Activated CD4-positive, alpha-beta memory T cell treated with anti-CD3 and anti-CD28 coated beads, Interleukin-2, amount 10 ng/mL, durations not matched to agents 7 days and 5 days (primary cell): ENCODE measurements at regions of chr1 and their contacts with region 1.

Region 1: GRCh38 chr1:9004700-9005394 is 21.4 kb downstream of the SLC2A7 start:
- DNase-seq: peak; percentile 87
- H3K4me3 Mint-ChIP-seq: no peak overlapping the region
- H3K27ac Mint-ChIP-seq: no peak overlapping the region
- H3K4me1 Mint-ChIP-seq: peaks cover 10% of the 10 kb centered on the region
- H3K27me3 Mint-ChIP-seq: peaks cover 2% of the 10 kb centered on the region

Region 2: DNA sequence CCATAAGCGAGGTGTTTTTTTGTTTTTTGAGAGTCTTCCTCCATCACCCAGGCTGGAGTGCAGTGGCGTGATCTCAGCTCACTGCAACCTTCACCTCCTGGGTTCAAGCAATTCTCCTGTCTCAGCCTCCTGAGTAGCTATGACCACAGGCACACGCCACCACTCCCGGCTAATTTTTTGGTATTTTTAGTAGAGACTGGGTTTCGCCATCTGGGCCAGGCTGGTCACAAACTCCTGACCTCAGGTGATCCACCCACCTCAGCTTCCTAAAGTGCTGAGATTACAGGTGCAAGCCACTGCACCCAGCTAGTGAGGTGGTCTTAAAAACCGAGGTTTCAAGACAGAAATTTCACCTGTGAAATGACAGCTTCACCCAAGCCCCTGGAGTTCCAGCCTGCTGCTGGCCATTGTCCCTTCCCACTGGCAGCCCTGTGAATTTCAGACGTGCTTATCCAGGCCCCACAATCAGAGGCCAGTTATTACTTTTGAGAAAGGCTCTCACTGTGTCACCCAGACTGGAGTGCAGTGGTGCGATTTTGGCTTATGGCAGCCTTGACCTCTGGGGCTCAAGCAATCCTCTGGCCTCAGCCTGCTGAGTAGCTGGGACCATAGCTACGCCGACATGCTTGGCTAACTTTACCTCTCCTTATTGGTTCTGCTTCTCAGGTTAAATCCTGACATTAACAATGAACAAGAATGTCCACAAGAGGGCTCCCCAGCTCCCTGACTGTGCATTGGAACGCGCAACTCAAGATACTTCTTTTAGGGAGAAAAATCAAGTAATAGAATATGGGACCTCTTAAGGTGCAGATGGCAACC is 145.8 kb before region 1 on chr1:
- CTCF ChIA-PET with region 1: interaction called, 72 read pairs
- POLR2A ChIA-PET with region 1: interaction called, 14 read pairs
- DNase-seq: peak; percentile 54
- H3K4me3 Mint-ChIP-seq: no peak overlapping the region
- H3K27ac Mint-ChIP-seq: peak overlapping the region; percentile 77
- H3K4me1 Mint-ChIP-seq: peaks cover 56% of the 10 kb centered on the region
- H3K27me3 Mint-ChIP-seq: no peaks in the 10 kb centered on the region

Region 3: GRCh38 chr1:8899076-8899475 is 105.8 kb before region 1 on chr1:
- CTCF ChIA-PET with region 1: interaction called, 22 read pairs
- POLR2A ChIA-PET with region 1: no interaction called
- DNase-seq: no peak
- H3K4me3 Mint-ChIP-seq: no peak overlapping the region
- H3K27ac Mint-ChIP-seq: peak overlapping the region; percentile 99
- H3K4me1 Mint-ChIP-seq: peaks cover 48% of the 10 kb centered on the region
- H3K27me3 Mint-ChIP-seq: no peaks in the 10 kb centered on the region

Region 4: DNA sequence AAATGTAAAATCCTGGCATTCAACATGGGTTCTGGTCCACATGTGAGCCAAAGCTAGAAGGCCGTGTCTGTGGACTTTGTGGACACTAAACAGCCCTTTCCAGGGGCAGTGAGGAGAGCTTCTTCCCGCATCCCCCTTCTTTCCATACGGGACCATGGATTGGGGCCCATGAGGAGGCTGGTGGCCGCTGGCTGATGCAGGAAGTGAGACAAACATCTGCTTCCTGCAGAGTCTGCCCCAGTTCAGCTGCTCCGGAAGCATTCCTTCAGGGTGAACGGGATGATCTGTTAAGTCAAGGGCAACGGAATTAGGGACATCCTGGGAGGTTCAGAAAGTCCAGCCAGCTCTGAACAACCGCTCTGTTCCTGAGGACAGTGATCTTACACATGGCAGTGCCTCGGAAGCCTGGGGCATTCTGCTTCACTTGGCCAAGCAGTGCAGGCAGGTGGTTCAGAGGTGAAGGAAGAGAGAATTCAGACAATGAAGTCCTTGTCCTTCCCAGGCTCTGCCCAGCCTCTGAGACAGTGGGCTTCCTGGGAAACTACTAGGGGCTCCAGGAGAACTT is 57.6 kb before region 1 on chr1:
- CTCF ChIA-PET with region 1: interaction called, 20 read pairs
- POLR2A ChIA-PET with region 1: interaction called, 3 read pairs
- DNase-seq: peak; percentile 37
- H3K4me3 Mint-ChIP-seq: no peak overlapping the region
- H3K27ac Mint-ChIP-seq: peak overlapping the region; percentile 99
- H3K4me1 Mint-ChIP-seq: peaks cover 84% of the 10 kb centered on the region
- H3K27me3 Mint-ChIP-seq: no peaks in the 10 kb centered on the region

Region 5: DNA sequence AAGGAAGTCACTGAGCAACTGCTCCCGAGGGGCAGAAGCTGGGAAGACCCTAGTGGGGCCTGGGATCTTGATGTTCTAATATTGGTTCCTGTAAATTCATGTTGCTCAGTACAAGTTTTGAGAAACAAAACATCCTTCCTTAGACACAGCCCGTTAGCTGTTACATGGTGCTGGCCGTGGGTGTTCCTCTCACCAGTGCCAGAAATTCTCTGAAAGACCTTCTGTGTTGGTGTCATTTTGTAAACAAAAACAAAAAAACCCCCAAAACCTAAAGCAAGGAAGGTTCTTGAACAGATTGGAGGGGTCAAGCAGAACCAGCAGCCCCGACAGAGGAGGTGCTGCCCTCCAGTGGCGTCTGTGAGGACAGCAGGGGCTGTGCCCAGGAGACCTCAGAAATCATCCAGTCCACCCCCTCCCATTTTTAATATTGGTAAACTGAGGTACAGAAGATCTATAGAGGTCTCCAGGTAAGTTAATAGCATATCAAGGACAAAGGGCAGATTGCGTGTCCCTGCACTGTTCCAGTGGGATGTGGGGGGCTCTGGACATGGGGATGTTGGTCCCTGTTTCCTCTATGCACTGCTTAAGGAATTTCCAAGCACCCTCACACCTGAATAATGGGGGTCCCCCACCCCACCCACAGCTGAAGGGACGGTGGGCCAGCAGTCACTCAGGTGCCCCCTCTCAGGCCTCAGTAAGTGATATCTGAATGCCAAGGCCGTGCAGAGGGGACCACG is 16.8 kb before region 1 on chr1:
- CTCF ChIA-PET with region 1: interaction called, 103 read pairs
- POLR2A ChIA-PET with region 1: interaction called, 21 read pairs
- DNase-seq: peak; percentile 76
- H3K4me3 Mint-ChIP-seq: peak overlapping the region; percentile 7
- H3K27ac Mint-ChIP-seq: peak overlapping the region; percentile 72
- H3K4me1 Mint-ChIP-seq: peaks cover 56% of the 10 kb centered on the region
- H3K27me3 Mint-ChIP-seq: peaks cover 5% of the 10 kb centered on the region

Region 6: DNA sequence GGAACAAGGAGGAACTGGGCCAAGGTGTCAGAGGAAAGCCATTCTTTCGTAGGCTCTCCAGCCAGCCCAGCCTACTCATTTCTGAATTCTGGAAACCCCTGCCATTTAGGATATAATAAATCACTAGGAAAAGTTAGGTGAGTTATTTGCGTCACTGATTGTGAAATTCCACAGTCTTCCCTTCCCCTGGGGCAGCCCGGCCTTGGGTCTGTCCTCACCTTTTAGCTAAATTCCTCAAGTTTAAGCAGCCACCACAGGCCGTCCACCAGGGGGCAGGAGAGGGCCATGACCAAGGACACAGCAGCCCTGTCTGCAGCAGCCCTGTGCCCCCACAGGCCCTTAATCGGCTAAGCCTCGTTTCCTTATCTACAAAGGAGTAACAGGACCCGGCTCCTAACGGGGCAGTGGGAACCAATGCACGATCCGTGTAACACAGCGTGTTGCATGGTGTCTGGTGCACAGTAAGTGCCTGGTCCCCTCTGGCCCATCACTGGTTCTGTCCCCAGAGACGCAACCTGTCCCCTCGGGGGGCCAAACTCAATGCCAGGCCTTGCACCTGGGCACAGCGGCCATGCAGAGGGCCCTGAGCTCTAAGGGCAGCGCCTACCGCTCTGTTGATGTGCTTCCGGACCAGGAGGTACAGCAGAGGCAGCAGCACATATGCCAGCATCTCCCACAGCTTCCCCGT is 106.0 kb after region 1 on chr1:
- CTCF ChIA-PET with region 1: interaction called, 13 read pairs
- POLR2A ChIA-PET with region 1: no interaction called
- DNase-seq: peak; percentile 87
- H3K4me3 Mint-ChIP-seq: no peak overlapping the region
- H3K27ac Mint-ChIP-seq: no peak overlapping the region
- H3K4me1 Mint-ChIP-seq: peaks cover 28% of the 10 kb centered on the region
- H3K27me3 Mint-ChIP-seq: no peaks in the 10 kb centered on the region